Tibial artery (tissue), 4 donors: ENCODE measurements at regions of chr10 and their contacts with region 1.

Region 1: DNA sequence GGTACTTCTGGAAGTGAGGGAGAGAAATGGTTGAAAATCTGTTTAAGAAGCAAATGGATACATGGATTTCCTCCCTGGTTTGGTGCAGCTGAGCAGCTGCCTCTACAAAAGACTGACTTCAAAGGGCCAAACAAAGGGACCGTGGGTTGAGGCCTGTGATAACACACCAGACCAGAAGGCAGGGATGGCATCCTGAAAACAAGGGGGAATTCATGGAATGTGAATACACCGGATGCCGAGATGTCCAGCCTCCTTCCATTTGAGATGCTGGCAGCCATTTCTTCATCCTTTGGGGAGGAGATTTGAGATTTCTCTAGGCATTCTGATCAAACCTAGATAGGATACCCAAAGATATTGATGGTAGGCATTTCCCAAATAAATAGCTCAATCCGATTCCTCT is 36.9 kb downstream of the TAF3 start:
- DNase-seq: no peak
- H3K4me3 ChIP-seq: no peak overlapping the region
- H3K27ac ChIP-seq: no peak overlapping the region
- H3K4me1 ChIP-seq: peaks cover 0 to 5% (median 0%) of the 10 kb centered on the region in 4 donors
- H3K27me3 ChIP-seq: no peaks in the 10 kb centered on the region
- CTCF ChIP-seq: no peak

Region 2: DNA sequence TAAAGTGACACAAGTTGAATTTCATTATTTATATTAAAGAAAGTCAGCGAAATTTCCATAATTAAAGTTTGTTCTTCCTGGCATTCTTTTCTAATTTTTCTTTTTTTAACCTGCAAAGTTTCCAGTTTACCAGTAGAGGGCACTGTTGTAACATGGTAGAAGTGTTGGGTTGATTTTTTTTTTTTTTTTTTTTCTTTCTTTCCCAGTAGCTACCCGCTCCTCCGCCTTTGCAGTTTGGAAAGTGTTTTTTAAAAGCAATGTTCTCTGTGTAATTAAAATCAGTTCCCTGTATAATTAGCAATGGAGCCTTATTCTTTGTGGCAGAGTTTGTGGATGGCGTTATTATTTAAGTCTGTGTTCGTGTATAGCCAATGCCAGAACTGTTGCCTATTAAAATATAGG is 16.8 kb after region 1 on chr10:
- intact Hi-C with region 1: loop called (anchors 1 kb)
- DNase-seq: no peak
- H3K4me3 ChIP-seq: no peak overlapping the region
- H3K27ac ChIP-seq: no peak overlapping the region
- H3K4me1 ChIP-seq: peaks cover 0 to 4% (median 0%) of the 10 kb centered on the region in 4 donors
- H3K27me3 ChIP-seq: no peaks in the 10 kb centered on the region
- CTCF ChIP-seq: peak; percentile 57 to 71